AG04450 (cell line): ENCODE measurements at regions of chr20 and their contacts with region 1.

Region 1: DNA sequence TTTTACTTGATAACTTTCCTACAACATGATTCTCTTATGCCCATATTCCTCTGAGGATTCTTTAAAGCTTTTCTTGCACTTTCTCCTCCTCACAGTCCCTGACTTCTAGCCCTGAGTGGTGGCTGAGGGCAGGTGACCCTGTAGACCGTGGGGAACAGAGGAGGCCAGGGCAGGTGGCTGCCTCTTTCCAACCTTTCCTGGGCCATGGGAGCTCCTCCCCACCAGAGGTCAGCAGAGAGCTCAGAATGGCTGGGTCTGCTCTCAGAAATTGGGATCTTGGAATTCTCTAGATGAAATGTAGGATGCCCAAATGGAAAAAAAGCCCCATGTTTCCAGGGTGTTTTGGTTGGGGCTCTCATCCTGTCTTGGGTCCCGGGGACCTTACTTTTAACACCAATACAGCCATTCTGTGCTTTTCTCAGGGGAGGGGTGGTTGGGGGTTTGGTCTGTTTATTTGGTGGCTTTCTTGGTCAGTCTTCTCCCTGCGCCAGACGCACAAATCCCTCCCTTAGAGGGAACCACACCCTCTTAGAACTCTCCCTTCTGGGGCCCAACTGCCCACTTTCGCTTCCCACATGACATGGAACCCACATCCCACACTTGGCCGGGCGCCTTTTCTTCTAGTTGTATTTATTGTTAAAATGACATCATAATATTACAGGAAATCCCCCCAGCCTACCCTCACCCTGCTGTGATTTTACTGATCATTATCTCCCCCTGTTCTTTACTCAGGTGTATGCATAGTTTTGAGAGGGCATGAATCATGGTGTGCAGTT is 17.9 kb downstream of the GNAS start:
- DNase-seq: no peak
- H3K4me3 ChIP-seq: no peak overlapping the region
- H3K27ac ChIP-seq: peak overlapping the region; percentile 11
- H3K27me3 ChIP-seq: peaks cover 10% of the 10 kb centered on the region
- CTCF ChIP-seq: peak; percentile 99

Region 2: GRCh38 chr20:58880994-58881752 is 10.7 kb after region 1 on chr20:
- CTCF ChIA-PET with region 1: interaction called, 11 read pairs
- POLR2A ChIA-PET with region 1: no interaction called
- DNase-seq: no peak
- H3K4me3 ChIP-seq: no peak overlapping the region
- H3K27ac ChIP-seq: no peak overlapping the region
- H3K27me3 ChIP-seq: peaks cover 20% of the 10 kb centered on the region
- CTCF ChIP-seq: no peak

Region 3: DNA sequence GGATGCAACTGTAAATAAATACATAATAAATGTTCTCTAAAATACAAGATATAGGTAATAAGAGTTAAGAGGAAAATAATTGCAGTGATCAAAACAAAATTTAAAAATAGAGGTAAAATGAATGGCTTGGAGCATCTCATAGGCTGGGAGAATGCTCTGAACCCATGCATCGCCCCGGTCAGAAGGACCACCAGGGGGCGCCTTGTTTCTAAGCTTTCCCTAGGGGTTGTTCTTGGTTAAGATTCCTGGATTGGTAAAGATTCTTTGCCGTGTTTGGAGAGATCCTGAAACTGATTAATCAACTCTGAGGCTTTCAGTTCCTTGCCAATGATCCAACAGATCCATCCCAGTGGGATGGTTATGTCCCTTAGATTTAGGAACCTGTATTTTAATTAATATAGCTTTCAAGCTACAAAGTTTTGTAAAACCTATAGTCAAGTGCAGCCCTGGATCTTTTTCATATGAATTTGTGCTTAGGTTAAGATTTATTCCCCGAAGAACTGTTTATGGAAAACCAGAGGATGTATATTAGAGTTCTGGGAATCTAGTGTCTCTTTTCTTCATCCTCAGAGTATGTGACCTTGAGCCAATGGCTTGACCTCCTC is 217.5 kb after region 1 on chr20:
- CTCF ChIA-PET with region 1: interaction called, 11 read pairs
- POLR2A ChIA-PET with region 1: no interaction called
- DNase-seq: no peak
- H3K4me3 ChIP-seq: no peak overlapping the region
- H3K27ac ChIP-seq: no peak overlapping the region
- H3K27me3 ChIP-seq: peaks cover 13% of the 10 kb centered on the region
- CTCF ChIP-seq: peak; percentile 90

Region 4: DNA sequence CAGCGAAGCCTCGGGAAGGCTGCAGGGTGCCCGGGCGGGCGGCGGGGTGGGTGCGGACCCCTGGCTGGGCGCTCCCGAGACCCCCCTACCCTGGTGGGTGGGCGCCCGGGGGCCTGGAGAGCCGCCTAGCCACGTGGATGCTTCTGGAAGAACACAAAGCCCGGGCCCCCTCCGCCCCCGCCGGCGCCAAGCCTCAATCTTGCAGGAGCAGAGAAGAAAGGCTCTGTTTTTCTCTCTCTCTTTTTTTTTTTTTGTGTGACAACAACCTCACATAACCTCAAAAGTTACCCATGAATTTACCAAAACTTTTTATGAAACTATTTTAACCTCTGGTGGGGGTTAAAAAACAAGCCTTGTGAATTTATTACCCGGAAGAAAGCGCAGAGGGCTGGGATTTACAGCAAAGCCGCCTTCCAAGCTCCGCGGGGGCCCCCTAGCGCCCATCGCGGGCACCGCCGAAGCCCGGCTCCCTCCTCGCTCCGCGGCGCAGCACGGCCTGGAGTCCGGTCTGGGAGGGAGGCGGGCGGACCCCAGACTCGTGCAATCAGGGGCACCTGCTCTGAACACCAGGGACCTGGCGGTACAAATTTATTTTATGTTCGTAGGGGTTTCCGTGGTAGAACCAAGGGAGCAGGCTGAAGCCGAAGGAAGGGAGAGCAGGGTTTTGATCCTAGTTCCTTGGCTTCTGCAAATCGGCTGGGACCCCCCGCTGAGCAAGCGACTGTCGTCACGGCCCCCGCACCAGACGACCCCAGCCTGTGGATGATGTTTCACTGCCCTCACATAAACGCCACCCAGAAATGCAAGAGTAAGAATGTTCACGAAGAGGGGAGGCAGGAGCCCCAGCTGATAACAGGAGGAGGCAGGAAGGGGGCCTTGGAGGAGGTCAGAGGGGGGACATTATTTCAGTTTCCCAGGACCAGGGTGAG is 352.1 kb after region 1 on chr20:
- CTCF ChIA-PET with region 1: interaction called, 26 read pairs
- POLR2A ChIA-PET with region 1: interaction called, 3 read pairs
- DNase-seq: peak; percentile 33
- H3K4me3 ChIP-seq: peak overlapping the region; percentile 55
- H3K27ac ChIP-seq: no peak overlapping the region
- H3K27me3 ChIP-seq: peaks cover 50% of the 10 kb centered on the region
- CTCF ChIP-seq: peak; percentile 97

Region 5: DNA sequence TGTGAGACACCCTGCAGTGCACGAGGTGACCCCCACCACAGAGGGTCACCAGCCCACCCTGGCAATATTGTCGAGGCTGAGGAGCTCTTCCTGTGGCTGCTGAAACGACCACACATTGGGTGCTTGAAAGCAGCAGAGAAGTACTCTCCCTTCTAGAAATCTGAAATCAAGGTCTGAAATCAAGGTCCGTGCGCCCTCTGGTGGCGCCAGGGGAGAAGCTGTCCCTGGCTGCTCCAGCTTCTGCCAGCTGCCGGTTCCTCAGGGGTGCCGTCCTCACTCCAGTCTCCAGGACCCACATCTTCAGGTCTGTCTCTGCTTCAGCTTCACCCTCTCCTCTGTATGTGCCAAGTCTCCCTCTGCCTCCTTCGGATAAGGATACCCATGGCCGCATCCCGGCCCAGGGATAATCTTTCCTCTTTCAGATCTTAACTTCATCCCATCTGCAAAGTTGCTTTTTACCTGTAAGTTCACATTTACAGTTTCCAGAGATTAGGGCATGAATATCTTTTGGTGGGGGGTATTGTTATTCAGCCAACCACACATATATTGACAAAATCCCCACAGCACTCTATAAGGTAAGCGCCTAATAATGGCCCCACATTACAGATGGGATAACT is 625.6 kb after region 1 on chr20:
- CTCF ChIA-PET with region 1: interaction called, 10 read pairs
- POLR2A ChIA-PET with region 1: no interaction called
- DNase-seq: peak; percentile 18
- H3K4me3 ChIP-seq: no peak overlapping the region
- H3K27ac ChIP-seq: no peak overlapping the region
- H3K27me3 ChIP-seq: no peaks in the 10 kb centered on the region
- CTCF ChIP-seq: peak; percentile 89